T-cell (primary cell): ENCODE measurements at regions of chr1 and their contacts with region 1.

Region 1: GRCh38 chr1:156711011-156711817 is 5.8 kb upstream of the CRABP2 start:
- DNase-seq: no peak
- ATAC-seq: no peak
- H3K4me3 ChIP-seq: no peak overlapping the region
- H3K4me3 Mint-ChIP-seq: no peak overlapping the region
- H3K27ac ChIP-seq: no peak overlapping the region
- H3K27ac Mint-ChIP-seq: no peak overlapping the region
- H3K4me1 ChIP-seq: peaks cover 10 to 16% of the 10 kb centered on the region in 2 experiments
- H3K4me1 Mint-ChIP-seq: peaks cover 8 to 12% (median 11%) of the 10 kb centered on the region in 3 donors
- H3K27me3 ChIP-seq: no peaks in the 10 kb centered on the region
- H3K27me3 Mint-ChIP-seq: no peaks in the 10 kb centered on the region

Region 2: DNA sequence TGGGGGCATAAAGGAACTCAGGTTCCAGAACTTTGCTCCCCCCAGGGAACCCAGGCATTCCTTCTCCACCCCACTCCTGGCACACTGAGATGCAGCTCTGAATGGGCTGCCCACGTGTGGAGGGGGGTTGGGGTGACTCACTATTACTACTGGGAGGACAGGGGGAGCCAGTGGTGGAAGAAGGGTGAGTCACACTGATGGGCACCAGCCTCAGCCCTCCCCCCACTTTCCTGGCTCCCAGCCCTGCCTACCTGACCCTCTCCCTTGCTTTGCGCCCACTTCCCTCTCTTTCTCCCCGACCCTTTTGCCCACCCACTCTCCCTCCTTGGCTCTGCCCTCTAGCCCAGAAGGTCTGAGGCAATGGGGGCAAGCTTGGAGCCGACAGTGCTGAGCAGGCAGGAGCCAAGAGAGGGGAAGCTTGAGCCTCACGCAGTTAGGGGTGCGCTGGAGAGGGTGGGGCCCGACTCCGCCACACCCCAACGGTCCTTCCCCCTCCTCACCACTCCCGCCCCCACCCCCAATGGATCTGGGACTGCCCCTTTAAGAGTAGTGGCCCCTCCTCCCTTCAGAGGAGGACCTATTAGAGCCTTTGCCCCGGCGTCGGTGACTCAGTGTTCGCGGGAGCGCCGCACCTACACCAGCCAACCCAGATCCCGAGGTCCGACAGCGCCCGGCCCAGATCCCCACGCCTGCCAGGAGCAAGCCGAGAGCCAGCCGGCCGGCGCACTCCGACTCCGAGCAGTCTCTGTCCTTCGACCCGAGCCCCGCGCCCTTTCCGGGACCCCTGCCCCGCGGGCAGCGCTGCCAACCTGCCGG is 596.9 kb before region 1 on chr1 and contains the start of gene LMNA:
- CTCF ChIA-PET with region 1: no interaction called
- POLR2A ChIA-PET with region 1: no interaction called
- DNase-seq: peak in 34 of 35 experiments; percentile 20 to 85 (median 53)
- ATAC-seq: peak; percentile 77 to 84 (median 82)
- H3K4me3 ChIP-seq: peak within 1 kb of the TSS; percentile 78 to 86
- H3K4me3 Mint-ChIP-seq: peak within 1 kb of the TSS; percentile 85 to 93 (median 92)
- H3K27ac ChIP-seq: peak within 1 kb of the TSS; percentile 68
- H3K27ac Mint-ChIP-seq: peak within 1 kb of the TSS; percentile 75 to 79
- H3K4me1 ChIP-seq: peaks cover 0 to 34% of the 10 kb centered on the region in 2 experiments
- H3K4me1 Mint-ChIP-seq: peaks cover 23 to 41% (median 33%) of the 10 kb centered on the region in 3 donors
- H3K27me3 ChIP-seq: peaks cover 6 to 37% of the 10 kb centered on the region in 2 experiments
- H3K27me3 Mint-ChIP-seq: peaks cover 17 to 18% of the 10 kb centered on the region in 2 donors
- total RNA-seq, gene LMNA: 40.3 to 970 (median 57.3) TPM

Region 3: DNA sequence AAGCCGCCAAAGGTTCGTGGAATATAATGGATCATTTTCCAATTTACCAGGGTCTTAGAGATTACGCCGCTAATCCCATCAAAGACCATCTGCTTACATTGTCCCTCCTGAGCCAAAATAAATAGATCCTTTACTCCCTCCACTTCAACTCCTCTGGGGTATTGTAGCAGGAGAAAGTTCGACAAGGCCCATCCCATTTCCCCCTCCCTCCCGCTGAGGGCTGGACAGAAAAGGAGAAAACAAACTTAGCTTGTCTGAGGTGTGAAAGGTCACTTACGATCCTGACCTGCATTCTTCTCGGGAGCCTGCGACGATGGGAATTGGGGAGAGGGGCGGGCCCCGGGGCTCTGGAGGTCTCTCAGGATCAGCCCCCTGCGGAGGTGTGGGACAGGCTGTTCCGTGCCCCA is 271.4 kb before region 1 on chr1:
- CTCF ChIA-PET with region 1: no interaction called
- POLR2A ChIA-PET with region 1: interaction called in 1 of 2 experiments, 10 read pairs
- DNase-seq: no peak
- ATAC-seq: no peak
- H3K4me3 ChIP-seq: no peak overlapping the region
- H3K4me3 Mint-ChIP-seq: no peak overlapping the region
- H3K27ac ChIP-seq: no peak overlapping the region
- H3K27ac Mint-ChIP-seq: no peak overlapping the region
- H3K4me1 ChIP-seq: peaks cover 11 to 34% of the 10 kb centered on the region in 2 experiments
- H3K4me1 Mint-ChIP-seq: peaks cover 26 to 40% (median 29%) of the 10 kb centered on the region in 3 donors
- H3K27me3 ChIP-seq: peaks cover 37 to 72% of the 10 kb centered on the region in 2 experiments
- H3K27me3 Mint-ChIP-seq: peaks cover 68 to 83% of the 10 kb centered on the region in 2 donors

Region 4: DNA sequence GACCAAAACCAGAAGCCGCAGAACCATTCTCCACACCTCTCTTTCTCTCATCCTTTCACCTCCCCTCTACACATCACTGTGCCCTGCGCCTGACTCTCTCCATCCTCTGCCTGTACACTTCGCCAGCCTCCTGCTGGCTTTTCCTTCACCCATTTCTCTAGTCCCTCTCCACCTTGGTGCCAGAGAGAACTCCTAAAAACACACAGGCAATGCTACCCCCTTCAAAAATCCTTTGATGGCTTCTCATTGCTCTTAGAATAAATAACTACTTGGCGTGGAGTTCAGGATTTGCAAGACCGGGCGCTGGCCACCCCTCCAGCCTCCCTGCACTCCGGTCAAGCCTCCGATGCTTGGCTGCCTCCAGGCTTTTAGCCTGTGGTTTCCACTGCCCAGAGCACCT is 14.5 kb before region 1 on chr1:
- CTCF ChIA-PET with region 1: no interaction called
- POLR2A ChIA-PET with region 1: no interaction called
- DNase-seq: no peak
- ATAC-seq: no peak
- H3K4me3 ChIP-seq: no peak overlapping the region
- H3K4me3 Mint-ChIP-seq: no peak overlapping the region
- H3K27ac ChIP-seq: no peak overlapping the region
- H3K27ac Mint-ChIP-seq: peak overlapping the region in 1 of 2 donors; percentile 43
- H3K4me1 ChIP-seq: peaks cover 17 to 24% of the 10 kb centered on the region in 2 experiments
- H3K4me1 Mint-ChIP-seq: peaks cover 12 to 20% (median 14%) of the 10 kb centered on the region in 3 donors
- H3K27me3 ChIP-seq: peaks cover 2 to 87% of the 10 kb centered on the region in 2 experiments
- H3K27me3 Mint-ChIP-seq: peaks cover 49 to 62% of the 10 kb centered on the region in 2 donors